ENCODE measurements at regions of chr14 and their contacts with region 1.

Region 1: GRCh38 chr14:92670160-92670559 is 78.3 kb downstream of the LGMN start:
- DNase-seq: no peak
- ATAC-seq: no peak
- H3K4me3 Mint-ChIP-seq: peak overlapping the region; percentile 13
- H3K27ac Mint-ChIP-seq: peak overlapping the region; percentile 52
- H3K4me1 Mint-ChIP-seq: peaks cover 84% of the 10 kb centered on the region
- H3K27me3 Mint-ChIP-seq: no peaks in the 10 kb centered on the region
- CTCF ChIP-seq: no peak

Region 2: DNA sequence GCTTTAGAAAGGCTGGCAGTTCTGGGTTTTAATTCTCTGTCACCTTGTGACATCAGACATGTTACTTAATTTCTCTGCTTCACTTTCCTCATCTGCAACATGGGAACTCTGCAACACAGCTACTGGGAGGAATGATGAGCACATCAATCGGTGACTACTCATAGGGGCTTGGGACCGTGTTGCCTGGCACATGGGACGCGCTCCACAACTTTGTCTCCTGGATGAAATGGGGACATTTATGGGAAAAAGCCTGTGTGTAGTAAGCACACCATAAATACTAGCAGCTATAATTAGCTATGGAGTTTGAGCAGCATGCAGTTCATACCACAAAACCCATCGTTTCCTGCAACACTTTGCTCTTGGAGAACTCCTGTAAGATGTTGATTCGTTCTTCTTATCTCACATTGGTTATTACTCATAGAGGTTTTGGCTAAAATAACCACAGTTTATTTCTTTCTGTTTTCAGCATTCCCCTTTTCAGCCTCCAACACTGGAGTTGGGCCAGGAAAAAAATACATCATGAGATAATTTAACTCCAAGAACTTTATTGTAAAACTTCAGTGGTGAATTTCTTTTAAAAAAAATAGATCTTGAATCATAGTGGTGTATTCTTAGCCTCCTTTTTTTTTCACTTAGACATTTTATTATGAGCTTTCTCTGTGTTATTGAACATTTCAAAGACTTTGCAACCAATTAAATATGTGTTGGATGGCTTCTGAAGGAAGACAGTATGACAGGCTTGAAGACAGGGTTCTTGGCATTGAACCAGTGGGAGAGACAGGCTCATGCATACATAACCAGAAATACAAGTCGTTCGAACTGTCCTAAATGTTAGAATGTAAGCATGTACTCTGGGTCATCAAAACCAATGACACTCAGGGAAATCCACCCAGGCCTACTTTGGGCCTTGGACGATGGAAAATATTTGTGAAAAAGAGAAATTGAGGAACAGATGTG is 83.9 kb before region 1 on chr14:
- CTCF ChIA-PET with region 1: interaction called, 33 read pairs
- POLR2A ChIA-PET with region 1: interaction called, 3 read pairs
- intact Hi-C with region 1: no loop called
- DNase-seq: no peak
- ATAC-seq: no peak
- H3K4me3 Mint-ChIP-seq: peak overlapping the region; percentile 29
- H3K27ac Mint-ChIP-seq: no peak overlapping the region
- H3K4me1 Mint-ChIP-seq: peaks cover 79% of the 10 kb centered on the region
- H3K27me3 Mint-ChIP-seq: no peaks in the 10 kb centered on the region
- CTCF ChIP-seq: no peak

Region 3: DNA sequence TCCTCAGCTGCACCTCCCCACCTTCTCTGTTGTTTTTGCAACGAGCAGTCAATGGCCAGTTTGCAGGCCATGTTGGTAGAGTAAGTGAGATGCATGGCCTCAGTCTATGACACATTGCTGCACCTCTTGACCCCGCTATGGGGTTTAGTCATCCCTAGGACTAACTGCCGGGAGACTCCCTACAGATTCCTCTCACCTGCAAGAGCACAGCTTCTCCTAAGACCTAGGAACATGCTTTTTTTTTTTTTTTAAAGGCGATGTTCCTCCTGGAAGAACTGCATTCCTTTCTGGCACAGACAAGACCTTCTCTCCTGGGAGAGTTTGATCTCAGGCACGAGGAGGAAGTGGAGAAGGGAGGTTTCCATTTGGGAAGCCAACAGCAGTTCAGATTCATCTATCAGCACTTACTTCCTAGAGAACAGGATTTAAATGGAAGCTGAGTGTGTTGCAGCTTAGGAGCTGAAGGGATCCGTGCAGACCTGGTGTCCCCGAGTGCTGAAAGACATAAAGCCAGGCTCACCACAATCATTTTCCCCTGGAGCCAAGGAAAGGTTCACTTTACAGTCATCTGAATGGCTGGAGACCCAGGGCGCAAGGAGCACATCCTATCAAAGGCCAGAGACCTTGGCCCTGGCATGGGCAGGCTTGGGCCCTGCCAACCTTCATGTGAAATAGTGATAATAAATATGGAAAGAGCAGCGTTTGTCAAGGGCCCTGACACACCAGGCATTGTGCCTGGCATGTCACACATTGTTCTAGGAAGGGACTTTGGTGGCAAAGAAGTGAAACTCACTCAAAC is 25.8 kb before region 1 on chr14:
- CTCF ChIA-PET with region 1: no interaction called
- POLR2A ChIA-PET with region 1: interaction called, 10 read pairs
- intact Hi-C with region 1: no loop called
- DNase-seq: no peak
- ATAC-seq: no peak
- H3K4me3 Mint-ChIP-seq: no peak overlapping the region
- H3K27ac Mint-ChIP-seq: no peak overlapping the region
- H3K4me1 Mint-ChIP-seq: peaks cover 36% of the 10 kb centered on the region
- H3K27me3 Mint-ChIP-seq: no peaks in the 10 kb centered on the region
- CTCF ChIP-seq: no peak

Region 4: DNA sequence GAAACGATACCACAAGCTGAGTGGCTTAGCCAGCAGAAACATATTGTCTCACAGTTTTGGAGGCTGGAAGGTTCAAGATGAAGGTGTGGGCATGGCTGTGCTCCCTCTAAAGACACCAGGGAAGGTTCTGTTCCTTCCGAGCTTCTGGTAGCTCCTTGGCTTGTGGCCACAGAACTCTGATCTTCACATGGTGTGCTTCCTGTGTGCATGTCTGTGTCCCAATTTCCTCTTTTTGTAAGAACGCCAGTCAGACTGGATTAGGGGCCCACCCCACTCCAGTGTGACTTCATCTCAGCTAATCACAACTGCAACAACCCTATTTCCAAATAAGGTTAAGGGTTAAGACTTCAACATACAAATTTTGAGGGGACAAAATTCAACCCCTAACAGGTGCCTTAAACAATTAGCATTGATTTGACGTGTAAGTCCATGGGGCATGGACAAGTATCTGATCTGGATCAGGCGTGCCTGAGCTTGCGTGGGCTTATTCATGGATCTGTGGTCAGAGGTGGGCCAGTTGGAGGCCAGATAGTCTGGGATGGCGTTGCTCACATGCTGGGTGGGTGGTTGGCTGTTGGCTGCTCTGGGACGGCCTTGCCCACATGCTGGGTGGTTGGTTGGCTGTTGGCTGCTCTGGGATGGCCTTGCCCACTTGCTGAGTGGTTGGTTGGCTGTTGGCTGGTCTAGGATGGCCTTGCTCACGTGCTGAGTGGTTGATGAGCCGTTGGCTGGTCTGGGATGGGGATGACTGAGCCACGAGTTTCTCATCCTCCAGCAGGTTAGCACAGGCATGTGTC is 10.2 kb before region 1 on chr14:
- CTCF ChIA-PET with region 1: interaction called, 5 read pairs
- POLR2A ChIA-PET with region 1: interaction called, 144 read pairs
- intact Hi-C with region 1: loop called (anchors 1 kb)
- DNase-seq: no peak
- ATAC-seq: peak; percentile 67
- H3K4me3 Mint-ChIP-seq: peak overlapping the region; percentile 36
- H3K27ac Mint-ChIP-seq: peak overlapping the region; percentile 74
- H3K4me1 Mint-ChIP-seq: peaks cover 97% of the 10 kb centered on the region
- H3K27me3 Mint-ChIP-seq: no peaks in the 10 kb centered on the region
- CTCF ChIP-seq: no peak

Region 5: DNA sequence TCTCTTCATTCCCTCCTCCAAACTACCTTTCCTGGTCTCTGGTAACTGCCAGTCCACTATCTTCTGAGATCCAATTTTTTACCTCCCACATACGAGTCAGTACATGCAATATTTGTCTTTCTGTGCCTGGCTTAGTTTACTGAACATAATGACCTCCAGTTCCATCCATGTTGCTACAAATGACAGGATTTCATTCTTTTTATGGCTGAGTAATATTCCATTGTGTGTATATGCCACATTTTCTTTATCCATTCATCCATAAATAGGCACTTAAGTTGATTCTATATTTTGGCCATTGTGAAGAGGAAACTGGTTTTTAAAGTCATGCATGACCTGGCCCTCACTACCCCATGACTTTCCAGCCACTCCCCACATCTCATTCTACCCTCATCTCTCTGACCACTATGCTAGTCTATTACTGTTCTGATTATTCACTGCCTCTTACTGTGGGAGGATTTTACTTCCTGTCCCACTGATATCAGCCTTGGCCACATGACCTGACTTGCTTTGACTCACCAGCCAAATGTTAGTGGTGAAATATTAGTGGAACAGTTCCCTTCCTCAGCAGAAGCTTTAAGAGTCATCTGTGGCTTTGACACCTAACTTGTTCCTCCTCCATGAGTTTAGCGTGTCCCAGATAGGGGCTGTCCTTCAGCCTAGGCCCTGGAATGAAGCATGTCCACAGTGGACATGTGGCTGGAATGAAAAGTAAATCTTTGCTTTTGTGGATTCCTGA is 176.2 kb after region 1 on chr14:
- CTCF ChIA-PET with region 1: no interaction called
- POLR2A ChIA-PET with region 1: interaction called, 11 read pairs
- intact Hi-C with region 1: no loop called
- DNase-seq: no peak
- ATAC-seq: peak; percentile 51
- H3K4me3 Mint-ChIP-seq: peak overlapping the region; percentile 3
- H3K27ac Mint-ChIP-seq: peak overlapping the region; percentile 46
- H3K4me1 Mint-ChIP-seq: peaks cover 40% of the 10 kb centered on the region
- H3K27me3 Mint-ChIP-seq: no peaks in the 10 kb centered on the region
- CTCF ChIP-seq: no peak

Region 6: DNA sequence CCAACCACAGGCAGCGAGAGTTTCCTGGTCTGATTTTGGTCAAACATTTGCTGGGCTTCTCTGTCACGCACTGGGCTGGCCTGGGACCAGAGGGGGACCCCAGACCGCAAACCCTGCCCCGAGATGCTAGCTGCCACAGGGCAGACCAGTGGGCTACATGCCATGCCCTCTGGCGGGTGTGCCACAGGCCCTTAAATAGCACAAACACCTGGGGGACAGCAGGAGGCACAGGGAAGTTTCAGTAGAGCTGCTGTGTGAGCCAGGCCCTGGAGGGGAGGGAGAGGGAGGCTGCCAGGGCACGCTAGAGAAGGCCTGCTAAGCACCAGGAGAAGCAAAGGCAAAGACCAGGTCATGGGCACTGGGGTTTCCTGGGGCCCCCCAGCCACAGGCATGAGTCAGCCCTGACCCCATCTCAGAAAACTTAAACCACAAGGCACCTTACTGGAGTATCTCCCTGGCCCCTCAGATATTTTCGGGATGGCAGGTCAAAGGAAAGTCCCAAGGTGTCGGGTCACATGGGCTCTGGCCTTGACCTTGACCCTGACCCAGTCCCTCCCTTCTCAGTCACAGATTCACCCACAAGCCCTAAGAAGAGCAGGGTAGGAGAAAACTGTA is 416.4 kb after region 1 on chr14:
- CTCF ChIA-PET with region 1: no interaction called
- POLR2A ChIA-PET with region 1: no interaction called
- intact Hi-C with region 1: no loop called
- DNase-seq: no peak
- ATAC-seq: no peak
- H3K4me3 Mint-ChIP-seq: no peak overlapping the region
- H3K27ac Mint-ChIP-seq: no peak overlapping the region
- H3K4me1 Mint-ChIP-seq: peaks cover 35% of the 10 kb centered on the region
- H3K27me3 Mint-ChIP-seq: no peaks in the 10 kb centered on the region
- CTCF ChIP-seq: no peak